Activated CD4-positive, alpha-beta memory T cell treated with anti-CD3 and anti-CD28 coated beads for 36 hours (primary cell): ENCODE measurements at regions of chr5 and their contacts with region 1.

Region 1: GRCh38 chr5:77379558-77380061 is 112.5 kb downstream of the WDR41 start:
- DNase-seq: peak; percentile 81
- H3K4me3 Mint-ChIP-seq: no peak overlapping the region
- H3K27ac Mint-ChIP-seq: peak overlapping the region; percentile 64
- H3K4me1 Mint-ChIP-seq: peaks cover 31% of the 10 kb centered on the region
- H3K27me3 Mint-ChIP-seq: peaks cover 3% of the 10 kb centered on the region

Region 2: GRCh38 chr5:76691467-76692138 is 688.0 kb before region 1 on chr5:
- CTCF ChIA-PET with region 1: no interaction called
- POLR2A ChIA-PET with region 1: no interaction called
- intact Hi-C with region 1: loop called (anchors 5 kb)
- DNase-seq: no peak
- H3K4me3 Mint-ChIP-seq: no peak overlapping the region
- H3K27ac Mint-ChIP-seq: peak overlapping the region; percentile 62
- H3K4me1 Mint-ChIP-seq: peaks cover 23% of the 10 kb centered on the region
- H3K27me3 Mint-ChIP-seq: no peaks in the 10 kb centered on the region

Region 3: GRCh38 chr5:77328930-77329647 is 50.5 kb before region 1 on chr5:
- CTCF ChIA-PET with region 1: interaction called, 3 read pairs
- POLR2A ChIA-PET with region 1: interaction called, 3 read pairs
- intact Hi-C with region 1: loop called (anchors 1 kb)
- DNase-seq: no peak
- H3K4me3 Mint-ChIP-seq: no peak overlapping the region
- H3K27ac Mint-ChIP-seq: peak overlapping the region; percentile 28
- H3K4me1 Mint-ChIP-seq: peaks cover 19% of the 10 kb centered on the region
- H3K27me3 Mint-ChIP-seq: peaks cover 6% of the 10 kb centered on the region

Region 4: DNA sequence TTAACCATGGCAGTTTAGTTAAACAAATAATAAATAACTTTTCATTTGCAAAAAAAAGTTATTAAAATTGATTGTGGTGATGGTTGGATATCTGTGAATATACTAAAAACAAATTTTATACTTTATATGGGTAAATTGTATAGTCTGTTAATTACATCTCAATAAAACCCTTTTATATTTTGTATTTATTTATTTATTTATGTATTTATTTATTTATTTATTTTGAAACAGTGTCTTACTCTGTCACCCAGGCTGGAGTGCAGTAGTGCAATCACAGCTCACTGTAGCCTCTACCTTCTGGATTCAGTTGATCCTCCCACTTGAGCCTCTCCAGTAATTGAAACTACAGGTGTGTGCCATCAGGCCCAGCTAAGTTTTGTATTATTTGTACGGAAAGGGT is 206.5 kb after region 1 on chr5:
- CTCF ChIA-PET with region 1: no interaction called
- POLR2A ChIA-PET with region 1: no interaction called
- intact Hi-C with region 1: no loop called
- DNase-seq: no peak
- H3K4me3 Mint-ChIP-seq: no peak overlapping the region
- H3K27ac Mint-ChIP-seq: no peak overlapping the region
- H3K4me1 Mint-ChIP-seq: no peaks in the 10 kb centered on the region
- H3K27me3 Mint-ChIP-seq: peaks cover 4% of the 10 kb centered on the region